MCF 10A (cell line): ENCODE measurements at regions of chr15 and their contacts with region 1.

Region 1: GRCh38 chr15:78108299-78109084 is 16.1 kb downstream of the SH2D7 start:
- DNase-seq: peak; percentile 84
- H3K4me3 Mint-ChIP-seq: no peak overlapping the region
- H3K27ac Mint-ChIP-seq: no peak overlapping the region
- H3K4me1 Mint-ChIP-seq: no peaks in the 10 kb centered on the region
- H3K27me3 Mint-ChIP-seq: no peaks in the 10 kb centered on the region
- CTCF ChIP-seq: peak; percentile 90

Region 2: GRCh38 chr15:77959432-77959879 is 149.0 kb before region 1 on chr15:
- CTCF ChIA-PET with region 1: interaction called, 289 read pairs
- POLR2A ChIA-PET with region 1: interaction called, 3 read pairs
- intact Hi-C with region 1: loop called (anchors 2 kb)
- DNase-seq: peak; percentile 77
- H3K4me3 Mint-ChIP-seq: peak overlapping the region; percentile 35
- H3K27ac Mint-ChIP-seq: no peak overlapping the region
- H3K4me1 Mint-ChIP-seq: peaks cover 6% of the 10 kb centered on the region
- H3K27me3 Mint-ChIP-seq: peaks cover 20% of the 10 kb centered on the region
- CTCF ChIP-seq: peak; percentile 94

Region 3: DNA sequence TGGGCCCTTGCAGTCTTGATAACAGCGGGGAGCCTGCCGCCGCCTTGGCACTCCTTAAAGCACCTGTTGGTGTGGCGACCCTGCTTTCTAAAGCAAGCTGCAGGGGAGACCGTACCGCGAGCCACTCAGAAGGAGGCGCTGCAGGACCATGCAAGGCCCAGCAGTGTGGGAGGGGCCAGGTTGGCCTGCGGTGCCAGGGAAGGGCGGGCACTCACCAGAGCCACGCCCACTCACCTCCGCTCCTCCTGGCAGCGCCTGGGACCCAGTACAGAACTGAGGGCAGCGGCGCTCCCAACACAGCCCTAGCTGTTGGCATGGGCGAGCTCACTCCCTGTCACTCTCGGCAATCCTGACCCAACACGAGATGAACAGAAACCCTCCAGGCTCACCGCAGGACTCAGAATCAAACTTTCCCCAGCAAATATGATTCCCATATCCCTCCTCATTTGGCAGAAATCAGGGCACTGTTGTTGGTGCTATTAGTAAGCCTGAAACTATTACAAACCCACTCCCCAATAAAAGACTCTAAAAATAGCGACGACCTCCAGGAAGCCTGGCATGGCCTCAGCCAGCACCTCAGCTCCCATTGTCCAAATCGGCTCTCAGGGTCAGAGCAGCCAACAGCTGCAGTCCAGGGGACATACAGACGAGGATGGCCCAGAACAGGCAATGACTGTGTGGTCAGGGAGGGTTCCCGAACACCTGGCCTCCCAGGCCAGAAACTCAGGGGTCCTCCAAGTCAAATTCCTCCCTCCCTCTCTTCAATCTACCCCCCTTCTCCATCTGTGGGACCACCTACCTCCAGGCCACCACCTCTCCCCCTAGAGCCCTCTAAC is 108.2 kb before region 1 on chr15:
- CTCF ChIA-PET with region 1: interaction called, 8 read pairs
- POLR2A ChIA-PET with region 1: no interaction called
- intact Hi-C with region 1: loop called (anchors 1 kb)
- DNase-seq: peak; percentile 71
- H3K4me3 Mint-ChIP-seq: no peak overlapping the region
- H3K27ac Mint-ChIP-seq: peak overlapping the region; percentile 23
- H3K4me1 Mint-ChIP-seq: peaks cover 7% of the 10 kb centered on the region
- H3K27me3 Mint-ChIP-seq: no peaks in the 10 kb centered on the region
- CTCF ChIP-seq: peak; percentile 39

Region 4: DNA sequence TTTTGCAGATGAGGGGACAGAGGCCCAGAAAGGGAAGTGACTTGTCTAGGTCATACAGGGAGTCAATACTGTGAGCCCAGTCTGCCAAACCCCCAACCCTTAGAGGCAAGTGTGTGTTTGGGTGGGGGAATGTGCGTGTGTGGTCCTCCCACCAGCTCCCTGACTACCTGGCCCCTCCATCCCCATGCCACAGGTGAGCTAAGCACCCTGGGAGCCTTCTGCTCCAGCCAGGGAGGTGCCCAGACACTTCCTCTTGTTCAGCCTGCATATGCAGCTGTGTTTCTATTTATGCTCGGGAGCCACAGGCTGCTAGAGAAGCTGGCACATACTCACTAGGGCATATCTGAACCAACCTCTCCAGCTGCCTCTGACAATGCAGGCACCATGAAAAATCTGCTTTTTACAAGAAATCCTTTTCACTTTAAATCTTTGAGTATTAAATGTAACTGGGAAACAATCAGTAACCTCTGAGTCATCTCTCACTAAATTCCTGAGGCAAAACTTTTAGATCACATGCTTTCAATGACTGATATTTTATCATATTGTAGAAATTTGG is 51.7 kb before region 1 on chr15:
- CTCF ChIA-PET with region 1: interaction called, 12 read pairs
- POLR2A ChIA-PET with region 1: no interaction called
- intact Hi-C with region 1: no loop called
- DNase-seq: no peak
- H3K4me3 Mint-ChIP-seq: no peak overlapping the region
- H3K27ac Mint-ChIP-seq: peak overlapping the region; percentile 95
- H3K4me1 Mint-ChIP-seq: peaks cover 32% of the 10 kb centered on the region
- H3K27me3 Mint-ChIP-seq: no peaks in the 10 kb centered on the region
- CTCF ChIP-seq: no peak

Region 5: DNA sequence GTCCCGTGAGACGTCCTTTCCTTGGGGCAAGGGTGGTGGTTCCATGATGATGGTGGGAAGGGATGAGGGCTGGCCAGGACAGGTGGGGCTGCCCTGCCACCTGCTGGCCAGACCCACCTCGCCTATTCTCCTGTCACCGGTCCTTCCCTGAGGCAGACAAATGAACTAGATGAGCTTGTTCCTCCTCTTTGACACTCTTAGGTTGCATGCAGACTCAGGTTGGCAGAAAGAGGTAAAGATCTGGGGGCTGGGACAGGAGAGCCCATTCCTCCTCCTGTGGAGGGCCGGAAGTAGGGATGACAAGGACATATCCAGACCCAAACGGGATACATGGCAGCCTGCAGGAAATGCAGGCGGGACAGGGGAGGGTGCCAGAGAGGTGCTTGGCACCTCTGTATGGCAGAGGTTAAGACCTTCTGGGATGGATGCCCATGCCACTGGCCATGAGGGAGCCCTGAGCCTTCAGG is 87.3 kb after region 1 on chr15:
- CTCF ChIA-PET with region 1: interaction called, 27 read pairs
- POLR2A ChIA-PET with region 1: no interaction called
- intact Hi-C with region 1: loop called (anchors 1 kb)
- DNase-seq: peak; percentile 50
- H3K4me3 Mint-ChIP-seq: no peak overlapping the region
- H3K27ac Mint-ChIP-seq: no peak overlapping the region
- H3K4me1 Mint-ChIP-seq: no peaks in the 10 kb centered on the region
- H3K27me3 Mint-ChIP-seq: peaks cover 16% of the 10 kb centered on the region
- CTCF ChIP-seq: peak; percentile 66

Region 6: GRCh38 chr15:78206326-78207109 is 98.0 kb after region 1 on chr15:
- CTCF ChIA-PET with region 1: no interaction called
- POLR2A ChIA-PET with region 1: no interaction called
- intact Hi-C with region 1: no loop called
- DNase-seq: no peak
- H3K4me3 Mint-ChIP-seq: no peak overlapping the region
- H3K27ac Mint-ChIP-seq: no peak overlapping the region
- H3K4me1 Mint-ChIP-seq: no peaks in the 10 kb centered on the region
- H3K27me3 Mint-ChIP-seq: peaks cover 24% of the 10 kb centered on the region
- CTCF ChIP-seq: no peak